RWPE1 (cell line): ENCODE measurements at regions of chr12 and their contacts with region 1.

Region 1: GRCh38 chr12:70290116-70290515 is 46.9 kb downstream of the CNOT2 start:
- DNase-seq: no peak
- H3K27ac ChIP-seq: no peak overlapping the region
- CTCF ChIP-seq: no peak

Region 2: DNA sequence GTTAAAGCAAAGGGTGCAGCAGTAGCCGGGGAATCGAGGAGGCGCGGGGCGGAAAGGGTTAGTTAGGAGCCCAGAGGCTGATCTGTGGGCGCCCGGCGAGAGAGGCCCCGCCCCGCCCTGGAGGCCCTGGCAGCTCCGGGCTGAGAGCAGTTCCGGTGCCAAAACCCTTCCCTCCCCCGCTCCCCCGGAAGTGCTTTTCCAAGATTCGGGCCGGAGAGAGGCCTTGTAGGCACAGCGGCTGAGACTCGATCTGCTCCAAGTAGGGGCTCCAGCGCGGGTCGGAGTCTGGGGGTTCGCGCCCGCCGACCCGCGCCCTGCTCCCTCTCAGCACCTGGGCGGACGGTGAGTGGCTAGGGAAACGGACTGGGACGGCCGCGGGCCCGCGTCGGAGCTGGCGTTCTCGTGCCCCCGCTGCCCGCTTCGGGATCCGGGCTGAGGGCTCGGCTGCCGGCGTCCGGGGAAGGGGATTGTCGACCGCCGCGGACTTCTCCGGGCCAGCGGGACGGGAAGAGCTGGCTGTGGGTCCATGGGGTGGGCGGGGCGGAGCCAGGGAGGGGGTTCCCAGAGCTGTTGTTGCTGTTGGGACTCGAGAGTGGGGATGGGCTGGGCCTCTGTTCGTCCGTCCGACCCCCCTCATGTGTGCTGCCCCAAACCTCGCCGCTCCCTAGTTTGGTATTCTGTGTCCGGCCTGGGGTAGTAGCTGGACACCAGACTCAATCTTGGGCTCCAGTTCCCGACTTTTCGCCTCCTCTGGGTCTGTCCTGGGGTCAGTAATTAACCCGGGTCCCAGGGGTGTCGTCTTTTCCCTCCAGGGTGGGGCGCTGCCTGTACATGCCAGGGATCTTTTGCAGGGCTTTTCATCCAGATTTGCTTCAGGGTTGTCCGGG is 819.7 kb before region 1 on chr12 and contains the start of gene FRS2:
- CTCF ChIA-PET with region 1: no interaction called
- POLR2A ChIA-PET with region 1: interaction called, 10 read pairs
- DNase-seq: peak; percentile 93
- H3K27ac ChIP-seq: peak within 1 kb of the TSS; percentile 86
- CTCF ChIP-seq: peak; percentile 59

Region 3: GRCh38 chr12:70317781-70318180 is 27.7 kb after region 1 on chr12:
- CTCF ChIA-PET with region 1: no interaction called
- POLR2A ChIA-PET with region 1: no interaction called
- DNase-seq: no peak
- H3K27ac ChIP-seq: no peak overlapping the region
- CTCF ChIP-seq: no peak